Keratinocyte (primary cell): ENCODE measurements at regions of chr17 and their contacts with region 1.

Region 1: DNA sequence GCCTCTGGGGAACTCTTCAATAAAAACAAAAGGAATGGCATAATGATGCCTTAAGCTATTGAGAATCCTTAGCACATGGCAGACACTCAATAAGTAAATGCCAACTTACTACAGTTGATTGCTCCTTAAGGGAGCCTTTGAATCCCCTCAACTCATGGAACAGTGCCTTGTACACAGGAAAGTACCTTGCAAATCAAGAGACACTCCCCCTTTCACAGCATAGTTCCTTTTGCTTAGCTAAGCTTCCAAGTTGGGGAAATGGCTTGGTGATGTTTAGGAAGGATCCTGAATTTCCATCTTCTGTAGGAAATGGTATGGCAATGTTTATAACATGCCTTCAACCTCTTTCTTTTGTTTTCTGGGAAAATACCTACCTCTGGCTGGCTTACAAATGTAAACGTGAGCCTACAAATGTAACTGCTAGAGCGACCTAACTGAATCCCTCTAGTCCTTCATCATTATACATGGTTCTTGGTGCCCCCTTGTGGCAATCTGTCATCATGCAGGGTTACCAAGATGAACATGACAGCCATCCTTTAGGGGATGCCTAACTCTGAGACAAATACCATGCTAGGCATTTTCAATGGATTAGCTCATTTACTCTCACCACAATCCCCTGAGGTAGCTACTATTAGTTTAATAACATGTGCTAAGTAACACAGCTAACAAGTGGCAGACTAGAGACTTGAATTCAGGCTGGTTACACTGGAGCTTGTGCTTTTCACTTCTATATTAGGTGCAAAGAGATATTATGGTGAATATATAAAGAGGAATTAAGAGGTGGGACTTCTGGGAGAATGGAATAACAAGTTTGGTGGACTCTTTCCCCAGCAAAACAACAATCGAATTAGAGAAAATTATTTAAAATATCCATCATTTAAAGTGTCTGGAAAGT is 65.0 kb downstream of the MMD start:
- DNase-seq: peak; percentile 49
- H3K4me3 ChIP-seq: no peak overlapping the region
- H3K27ac ChIP-seq: no peak overlapping the region
- H3K4me1 ChIP-seq: no peaks in the 10 kb centered on the region
- H3K27me3 ChIP-seq: no peaks in the 10 kb centered on the region
- CTCF ChIP-seq: peak; percentile 70 to 82 (median 80)

Region 2: DNA sequence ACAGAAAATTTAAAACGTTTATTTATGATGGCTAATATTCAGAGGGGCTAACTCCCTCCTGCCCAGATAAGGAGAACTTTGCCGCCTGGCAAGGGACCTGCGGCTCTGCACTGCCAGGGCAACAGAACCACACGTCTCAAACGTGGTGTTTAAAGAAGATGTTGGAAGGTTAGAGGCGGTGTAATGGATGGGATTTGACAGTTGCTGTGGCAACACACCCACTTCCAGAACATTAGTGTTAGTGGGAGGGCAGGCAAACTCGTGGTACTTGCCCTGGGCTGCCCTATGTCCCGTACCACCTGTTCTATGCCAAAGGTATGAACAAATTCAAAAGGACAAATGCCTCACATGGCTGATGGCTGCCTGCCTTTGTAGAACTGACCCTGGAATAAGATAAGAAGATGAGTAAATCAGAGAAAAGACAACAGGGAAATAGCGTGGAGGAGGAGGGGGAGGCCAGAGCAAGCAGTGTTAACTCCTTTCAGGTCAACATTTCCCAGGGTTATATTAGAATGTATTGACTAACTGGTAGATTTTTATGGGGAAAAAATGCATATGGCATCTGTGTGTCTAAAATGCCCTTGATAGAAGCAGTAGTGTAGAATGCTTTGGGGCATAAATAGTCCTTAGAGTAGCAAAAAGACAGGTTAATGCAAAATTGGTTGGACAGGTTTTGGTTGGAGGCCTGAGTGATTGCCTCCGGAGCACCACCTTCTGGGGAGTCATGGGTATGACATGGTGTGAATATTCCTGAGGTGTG is 61.1 kb before region 1 on chr17:
- dilution Hi-C with region 1: no loop called
- DNase-seq: no peak
- H3K4me3 ChIP-seq: no peak overlapping the region
- H3K27ac ChIP-seq: no peak overlapping the region
- H3K4me1 ChIP-seq: no peaks in the 10 kb centered on the region
- H3K27me3 ChIP-seq: no peaks in the 10 kb centered on the region
- CTCF ChIP-seq: peak; percentile 79 to 91 (median 91)

Region 3: GRCh38 chr17:55496094-55496881 is 139.6 kb after region 1 on chr17:
- dilution Hi-C with region 1: loop called (anchors 25 kb)
- DNase-seq: no peak
- H3K4me3 ChIP-seq: no peak overlapping the region
- H3K27ac ChIP-seq: no peak overlapping the region
- H3K4me1 ChIP-seq: no peaks in the 10 kb centered on the region
- H3K27me3 ChIP-seq: no peaks in the 10 kb centered on the region
- CTCF ChIP-seq: no peak